ENCODE measurements at regions of chr1 and their contacts with region 1.

Region 1: GRCh38 chr1:54810100-54810942 is 9.2 kb upstream of the TTC22 start:
- DNase-seq: peak in 1 of 2 donors; percentile 86
- ATAC-seq: peak; percentile 73
- H3K4me3 ChIP-seq: no peak overlapping the region
- H3K27ac ChIP-seq: no peak overlapping the region
- H3K4me1 ChIP-seq: no peaks in the 10 kb centered on the region
- H3K27me3 ChIP-seq: no peaks in the 10 kb centered on the region

Region 2: GRCh38 chr1:54070171-54070837 is 740.0 kb before region 1 on chr1:
- intact Hi-C with region 1: loop called (anchors 2 to 10 kb)
- DNase-seq: no peak
- ATAC-seq: no peak
- H3K4me3 ChIP-seq: no peak overlapping the region
- H3K27ac ChIP-seq: no peak overlapping the region
- H3K4me1 ChIP-seq: no peaks in the 10 kb centered on the region
- H3K27me3 ChIP-seq: no peaks in the 10 kb centered on the region

Region 3: GRCh38 chr1:54121482-54122134 is 688.7 kb before region 1 on chr1:
- intact Hi-C with region 1: loop called in 1 of 2 experiments (anchors 2 kb)
- DNase-seq: peak; percentile 85 to 93
- ATAC-seq: peak; percentile 86
- H3K4me3 ChIP-seq: no peak overlapping the region
- H3K27ac ChIP-seq: no peak overlapping the region
- H3K4me1 ChIP-seq: no peaks in the 10 kb centered on the region
- H3K27me3 ChIP-seq: no peaks in the 10 kb centered on the region

Region 4: GRCh38 chr1:54499360-54500106 is 310.8 kb before region 1 on chr1:
- intact Hi-C with region 1: loop called in 1 of 2 experiments (anchors 10 kb)
- DNase-seq: no peak
- ATAC-seq: peak; percentile 66
- H3K4me3 ChIP-seq: peak overlapping the region in 1 of 2 donors; percentile 18
- H3K27ac ChIP-seq: no peak overlapping the region
- H3K4me1 ChIP-seq: no peaks in the 10 kb centered on the region
- H3K27me3 ChIP-seq: no peaks in the 10 kb centered on the region

Region 5: GRCh38 chr1:54774820-54775498 is 35.4 kb before region 1 on chr1:
- intact Hi-C with region 1: no loop called
- DNase-seq: no peak
- ATAC-seq: no peak
- H3K4me3 ChIP-seq: no peak overlapping the region
- H3K27ac ChIP-seq: no peak overlapping the region
- H3K4me1 ChIP-seq: no peaks in the 10 kb centered on the region
- H3K27me3 ChIP-seq: no peaks in the 10 kb centered on the region